Activated CD4-positive, alpha-beta T cell treated with anti-CD3 and anti-CD28 coated beads for 36 hours (primary cell): ENCODE measurements at regions of chr19 and their contacts with region 1.

Region 1: DNA sequence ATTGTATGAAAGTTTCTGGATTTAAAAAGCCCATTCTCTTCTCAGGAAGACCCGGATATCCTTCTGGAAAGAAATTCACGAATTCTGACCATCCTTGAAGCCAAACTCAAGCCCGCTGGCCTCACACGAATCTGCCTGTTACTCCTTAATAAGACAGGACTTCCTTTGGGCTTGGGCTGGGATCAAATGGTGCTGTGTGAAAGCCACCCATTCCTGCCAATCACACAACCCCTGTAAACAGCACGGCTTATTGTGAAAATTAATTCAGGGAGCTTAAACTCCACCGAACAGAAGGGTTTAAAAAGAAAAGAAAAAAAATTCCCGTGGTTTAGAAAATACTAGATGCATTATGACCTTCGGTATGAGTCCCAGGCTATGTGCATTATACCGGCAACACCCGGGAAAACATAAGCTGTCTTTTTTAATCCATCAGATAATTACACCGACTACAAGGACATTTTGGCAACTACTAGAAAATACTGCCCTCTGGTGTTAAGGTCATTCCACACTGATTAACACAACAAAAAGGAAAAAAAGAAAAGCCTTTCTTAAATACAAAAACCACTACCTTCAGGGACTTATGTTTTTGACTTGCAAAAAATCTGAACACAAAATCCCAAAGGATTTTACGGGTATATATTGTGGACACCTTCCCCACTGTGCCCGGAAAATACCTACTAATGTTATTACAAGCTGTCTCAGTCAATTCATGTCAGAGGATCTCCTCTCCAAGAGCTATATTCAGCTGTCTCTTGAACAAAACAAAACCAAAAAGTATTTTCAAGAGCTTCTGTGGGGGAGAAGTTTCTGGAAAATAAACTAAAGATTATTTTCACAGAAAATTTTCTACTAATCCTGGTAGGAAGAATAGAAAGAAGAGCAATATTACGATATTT is 76.0 kb upstream of the LSM14A start:
- DNase-seq: no peak
- ATAC-seq: no peak
- H3K4me3 Mint-ChIP-seq: no peak overlapping the region
- H3K27ac Mint-ChIP-seq: no peak overlapping the region
- H3K4me1 Mint-ChIP-seq: no peaks in the 10 kb centered on the region
- H3K27me3 Mint-ChIP-seq: peaks cover 8% of the 10 kb centered on the region

Region 2: DNA sequence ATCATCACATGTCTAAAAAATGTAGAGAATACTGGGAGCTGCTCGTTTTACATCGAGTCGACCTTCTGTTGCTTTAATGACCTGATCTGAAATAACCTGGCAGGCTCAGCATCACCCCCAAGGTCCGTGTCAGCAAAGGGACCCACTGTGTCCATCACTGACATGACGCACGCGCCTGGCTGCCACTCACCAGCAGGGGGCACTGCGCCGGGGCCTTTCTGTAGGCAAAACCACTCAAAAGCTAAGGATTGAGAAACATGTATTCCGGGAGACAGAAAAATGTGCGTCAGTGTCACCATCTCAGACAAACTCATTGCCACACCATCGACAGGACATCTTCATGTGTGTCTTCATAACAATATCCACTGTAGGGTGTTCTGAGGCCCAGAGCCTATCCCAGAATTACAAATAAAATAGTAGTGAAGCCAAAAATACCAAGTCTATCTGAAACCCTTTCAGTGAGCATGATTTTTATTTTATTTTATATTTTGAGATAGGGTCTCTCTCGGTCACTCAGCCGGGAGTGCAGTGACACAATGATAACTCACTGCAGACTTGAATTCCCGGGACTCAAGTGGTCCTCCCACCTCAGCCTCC is 54.2 kb before region 1 on chr19:
- CTCF ChIA-PET with region 1: interaction called, 30 read pairs
- POLR2A ChIA-PET with region 1: no interaction called
- intact Hi-C with region 1: loop called (anchors 1 kb)
- DNase-seq: peak; percentile 91
- ATAC-seq: peak; percentile 71
- H3K4me3 Mint-ChIP-seq: no peak overlapping the region
- H3K27ac Mint-ChIP-seq: no peak overlapping the region
- H3K4me1 Mint-ChIP-seq: peaks cover 3% of the 10 kb centered on the region
- H3K27me3 Mint-ChIP-seq: peaks cover 10% of the 10 kb centered on the region

Region 3: GRCh38 chr19:34066007-34066643 is 30.1 kb before region 1 on chr19:
- CTCF ChIA-PET with region 1: interaction called, 10 read pairs
- POLR2A ChIA-PET with region 1: no interaction called
- intact Hi-C with region 1: no loop called
- DNase-seq: peak; percentile 8
- ATAC-seq: no peak
- H3K4me3 Mint-ChIP-seq: no peak overlapping the region
- H3K27ac Mint-ChIP-seq: no peak overlapping the region
- H3K4me1 Mint-ChIP-seq: peaks cover 2% of the 10 kb centered on the region
- H3K27me3 Mint-ChIP-seq: peaks cover 20% of the 10 kb centered on the region